Right ventricle myocardium superior (tissue), 1 donor: ENCODE measurements at regions of chr1 and their contacts with region 1.

Region 1: DNA sequence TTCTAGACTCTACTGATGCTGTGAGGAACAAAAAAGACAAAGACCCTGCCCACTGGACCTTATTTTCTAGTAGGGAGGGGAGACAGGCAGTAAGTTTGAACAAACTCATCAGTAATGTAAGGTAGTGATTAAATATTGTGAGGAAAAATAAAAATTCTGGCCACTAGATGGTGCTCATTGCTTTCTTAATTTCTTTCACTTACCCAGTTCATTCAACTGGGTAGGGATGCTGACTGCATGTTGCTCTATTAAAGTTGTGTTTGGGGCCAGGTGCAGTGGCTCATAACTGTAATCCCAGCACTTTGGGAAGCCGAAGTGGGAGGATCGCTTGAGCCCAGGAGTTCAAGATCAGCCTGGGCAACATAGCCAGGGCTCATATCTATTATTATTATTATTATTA is 6.3 kb upstream of the KYAT3 start:
- DNase-seq: no peak
- ATAC-seq: peak; percentile 95

Region 2: GRCh38 chr1:89358287-89358893 is 359.7 kb after region 1 on chr1:
- intact Hi-C with region 1: loop called (anchors 5 kb)
- DNase-seq: peak; percentile 85
- ATAC-seq: peak; percentile 92

Region 3: GRCh38 chr1:89454845-89455521 is 456.3 kb after region 1 on chr1:
- intact Hi-C with region 1: loop called (anchors 5 kb)
- DNase-seq: no peak
- ATAC-seq: peak; percentile 61